H1 (cell line): ENCODE measurements at regions of chr16 and their contacts with region 1.

Region 1: DNA sequence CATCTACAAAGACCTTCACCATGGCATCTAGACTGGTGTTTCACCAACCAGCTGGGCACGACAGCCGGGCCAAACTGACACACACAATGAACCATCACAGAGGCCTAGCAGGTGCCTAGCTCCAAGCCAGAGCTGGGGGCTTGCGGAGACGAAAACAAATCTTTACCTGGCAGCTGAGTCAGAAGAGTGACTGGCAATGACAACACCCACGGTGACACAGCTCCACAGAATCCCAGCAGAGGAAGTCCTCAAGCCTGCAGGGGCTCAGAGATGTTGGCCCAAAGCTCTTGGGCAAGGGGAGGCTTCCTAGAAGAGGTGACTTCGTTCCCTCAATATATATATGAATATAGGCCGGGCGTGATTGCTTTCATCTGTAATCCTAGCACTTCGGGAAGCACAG is 5.1 kb downstream of the MMP25 start:
- DNase-seq: no peak
- H3K4me3 ChIP-seq: no peak overlapping the region
- H3K27ac ChIP-seq: no peak overlapping the region
- H3K4me1 ChIP-seq: peaks cover 0 to 7% (median 4%) of the 10 kb centered on the region in 4 experiments; a peak in 3 of 7 replicates
- H3K27me3 ChIP-seq: peaks cover 0 to 8% (median 3%) of the 10 kb centered on the region in 4 experiments; a peak in 6 of 7 replicates
- CTCF ChIP-seq: no peak
- EP300 ChIP-seq: no peak
- POLR2A ChIP-seq: no peak
- RAD21 ChIP-seq: no peak

Region 2: GRCh38 chr16:2938206-2938605 is 113.3 kb before region 1 on chr16:
- CTCF ChIA-PET with region 1: no interaction called
- POLR2A ChIA-PET with region 1: no interaction called
- DNase-seq: no peak
- H3K4me3 ChIP-seq: no peak overlapping the region
- H3K27ac ChIP-seq: no peak overlapping the region
- H3K4me1 ChIP-seq: no peaks in the 10 kb centered on the region; a peak in 1 of 7 replicates
- H3K27me3 ChIP-seq: no peaks in the 10 kb centered on the region
- CTCF ChIP-seq: no peak
- EP300 ChIP-seq: no peak
- POLR2A ChIP-seq: no peak
- RAD21 ChIP-seq: no peak

Region 3: DNA sequence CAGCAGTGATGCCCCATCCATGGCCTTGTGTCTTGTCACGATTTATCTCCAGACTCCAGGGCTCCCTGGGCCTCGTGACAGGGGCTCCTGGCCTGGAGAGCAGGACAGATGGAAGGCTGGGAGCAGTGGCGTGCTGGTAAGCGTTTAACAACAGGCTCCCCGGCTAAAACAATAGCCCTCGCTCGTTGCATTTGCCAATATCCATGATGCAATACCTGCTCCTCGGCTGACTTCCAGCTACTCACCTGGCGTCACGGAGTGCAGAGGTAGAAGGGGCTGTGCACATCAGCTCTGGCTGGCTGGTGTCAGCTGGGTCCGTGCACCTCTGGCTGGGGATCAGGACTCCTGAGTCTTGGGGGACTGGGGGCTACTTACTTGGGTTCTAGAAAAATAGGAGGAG is 13.2 kb before region 1 on chr16:
- CTCF ChIA-PET with region 1: interaction called, 117 read pairs
- POLR2A ChIA-PET with region 1: interaction called, 94 read pairs
- DNase-seq: peak in 1 of 2 experiments; percentile 63
- H3K4me3 ChIP-seq: no peak overlapping the region; a peak in 1 of 8 replicates
- H3K27ac ChIP-seq: no peak overlapping the region; the same call in 1 of the 2 replicates
- H3K4me1 ChIP-seq: peaks cover 3 to 19% (median 12%) of the 10 kb centered on the region in 4 experiments
- H3K27me3 ChIP-seq: peaks cover 0 to 11% (median 3%) of the 10 kb centered on the region in 4 experiments; a peak in 1 of 7 replicates
- CTCF ChIP-seq: no peak
- EP300 ChIP-seq: no peak
- POLR2A ChIP-seq: no peak
- RAD21 ChIP-seq: no peak

Region 4: GRCh38 chr16:3198334-3199072 is 147.0 kb after region 1 on chr16:
- CTCF ChIA-PET with region 1: no interaction called
- POLR2A ChIA-PET with region 1: no interaction called
- DNase-seq: no peak
- H3K4me3 ChIP-seq: no peak overlapping the region
- H3K27ac ChIP-seq: no peak overlapping the region
- H3K4me1 ChIP-seq: no peaks in the 10 kb centered on the region
- H3K27me3 ChIP-seq: no peaks in the 10 kb centered on the region; a peak in 1 of 7 replicates
- CTCF ChIP-seq: no peak
- EP300 ChIP-seq: no peak
- POLR2A ChIP-seq: no peak
- RAD21 ChIP-seq: no peak